Activated naive CD4-positive, alpha-beta T cell treated with anti-CD3 and anti-CD28 coated beads for 36 hours (primary cell): ENCODE measurements at regions of chr19 and their contacts with region 1.

Region 1: DNA sequence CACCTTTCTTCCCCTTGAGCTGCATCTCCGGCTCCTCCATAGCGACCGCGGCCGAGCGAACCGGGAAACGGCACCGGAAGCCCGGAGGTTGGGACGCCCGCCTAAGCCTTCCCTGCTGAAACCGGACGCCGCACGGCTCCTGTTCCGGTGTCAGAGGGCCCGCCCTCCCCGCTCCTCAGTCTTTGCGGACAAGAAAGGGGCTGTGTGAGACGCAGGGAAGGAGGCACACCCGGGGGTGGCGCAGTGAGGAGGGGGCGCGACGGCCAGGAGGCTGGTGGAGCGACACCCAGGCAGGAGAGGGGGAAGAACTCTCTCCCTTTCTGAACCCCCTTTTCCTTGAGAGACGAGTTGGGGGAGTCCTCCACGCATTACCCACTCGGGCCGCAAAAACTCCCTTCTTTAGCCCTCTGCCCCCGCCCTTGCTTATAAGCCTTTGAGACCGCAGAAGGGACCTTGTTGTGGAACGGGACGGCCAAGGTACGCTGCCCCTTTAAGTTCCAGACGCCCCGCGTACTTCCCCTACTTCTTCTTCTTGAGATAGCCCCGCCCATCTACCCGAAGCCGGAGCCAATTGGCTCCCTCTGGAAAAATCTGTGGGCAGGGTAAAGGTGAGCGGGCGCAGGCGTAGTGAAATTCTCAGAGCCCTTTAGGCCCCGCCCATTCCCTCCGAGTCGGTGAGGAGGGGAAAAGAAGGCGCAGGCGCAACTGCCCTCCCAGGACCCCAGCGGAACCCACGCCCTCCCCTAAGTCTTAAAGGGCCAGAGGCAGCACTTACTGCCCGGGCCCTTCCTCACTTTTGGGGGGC is at the starts of genes BORCS8 and RFXANK:
- DNase-seq: peak; percentile 100
- H3K4me3 Mint-ChIP-seq: peak within 1 kb of the TSS; percentile 93
- H3K27ac Mint-ChIP-seq: peak within 1 kb of the TSS; percentile 96
- H3K4me1 Mint-ChIP-seq: peaks cover 49% of the 10 kb centered on the region
- H3K27me3 Mint-ChIP-seq: no peaks in the 10 kb centered on the region
- total RNA-seq, gene BORCS8: 14.0 to 16.1 TPM
- total RNA-seq, gene RFXANK: 48.4 to 49.3 TPM

Region 2: DNA sequence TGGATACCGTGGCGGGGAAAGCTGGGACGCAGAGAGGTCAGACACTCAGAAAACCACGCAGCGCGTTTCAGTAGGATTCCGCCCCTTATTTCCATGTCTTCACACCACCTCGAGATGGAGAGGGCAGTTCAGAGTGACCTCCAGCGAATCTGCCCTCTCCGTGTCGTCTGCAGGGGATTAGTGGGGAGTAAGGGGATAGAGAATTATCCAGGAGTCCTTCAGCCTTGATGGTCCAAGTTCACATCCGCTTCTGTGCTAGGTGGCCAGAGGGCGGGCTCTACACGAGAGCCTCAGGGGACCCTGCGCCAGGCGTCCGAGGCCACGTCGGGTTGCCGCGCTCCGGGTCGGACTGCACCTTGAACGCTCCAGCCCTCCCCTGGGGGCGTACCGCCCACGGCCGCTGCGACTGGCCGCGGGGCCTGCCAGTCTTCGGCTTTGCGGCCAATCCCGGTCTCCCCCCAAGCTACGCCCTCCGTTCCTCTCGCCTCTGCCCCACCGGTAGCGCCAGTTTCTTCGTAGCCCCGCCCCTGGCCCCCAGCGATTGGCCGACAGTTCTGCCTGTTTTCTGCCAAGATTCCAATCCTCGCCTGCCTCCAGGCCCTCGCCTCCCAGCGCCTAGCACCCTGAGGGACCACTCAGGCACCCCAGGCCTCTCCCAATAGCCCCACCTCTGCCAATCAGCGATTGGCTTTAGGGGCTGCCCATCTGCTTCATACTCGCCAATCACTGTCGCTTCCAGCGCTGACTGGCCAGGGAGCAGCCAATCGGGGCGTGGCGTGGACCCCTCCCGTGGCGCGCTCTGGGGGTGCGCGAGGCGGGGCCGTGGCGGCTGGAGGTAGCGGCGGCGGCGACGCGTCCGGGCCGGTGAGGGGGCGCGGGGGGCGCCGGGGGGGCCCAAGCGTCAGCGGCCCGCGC is 128.8 kb before region 1 on chr19 and contains the start of gene SLC25A42:
- CTCF ChIA-PET with region 1: no interaction called
- intact Hi-C with region 1: loop called (anchors 1 kb)
- DNase-seq: peak; percentile 99
- H3K4me3 Mint-ChIP-seq: peak within 1 kb of the TSS; percentile 85
- H3K27ac Mint-ChIP-seq: peak within 1 kb of the TSS; percentile 83
- H3K4me1 Mint-ChIP-seq: peaks cover 41% of the 10 kb centered on the region
- H3K27me3 Mint-ChIP-seq: no peaks in the 10 kb centered on the region
- total RNA-seq, gene SLC25A42: 6.7 to 8.5 TPM

Region 3: GRCh38 chr19:19170053-19170872 is 22.0 kb before region 1 on chr19 and contains the start of gene MEF2B:
- CTCF ChIA-PET with region 1: interaction called, 11 read pairs
- intact Hi-C with region 1: no loop called
- DNase-seq: peak; percentile 74
- H3K4me3 Mint-ChIP-seq: peak within 1 kb of the TSS; percentile 28
- H3K27ac Mint-ChIP-seq: no peak within 1 kb of the TSS
- H3K4me1 Mint-ChIP-seq: peaks cover 11% of the 10 kb centered on the region
- H3K27me3 Mint-ChIP-seq: no peaks in the 10 kb centered on the region
- total RNA-seq, gene MEF2B: 3.1 to 4.6 TPM

Region 4: DNA sequence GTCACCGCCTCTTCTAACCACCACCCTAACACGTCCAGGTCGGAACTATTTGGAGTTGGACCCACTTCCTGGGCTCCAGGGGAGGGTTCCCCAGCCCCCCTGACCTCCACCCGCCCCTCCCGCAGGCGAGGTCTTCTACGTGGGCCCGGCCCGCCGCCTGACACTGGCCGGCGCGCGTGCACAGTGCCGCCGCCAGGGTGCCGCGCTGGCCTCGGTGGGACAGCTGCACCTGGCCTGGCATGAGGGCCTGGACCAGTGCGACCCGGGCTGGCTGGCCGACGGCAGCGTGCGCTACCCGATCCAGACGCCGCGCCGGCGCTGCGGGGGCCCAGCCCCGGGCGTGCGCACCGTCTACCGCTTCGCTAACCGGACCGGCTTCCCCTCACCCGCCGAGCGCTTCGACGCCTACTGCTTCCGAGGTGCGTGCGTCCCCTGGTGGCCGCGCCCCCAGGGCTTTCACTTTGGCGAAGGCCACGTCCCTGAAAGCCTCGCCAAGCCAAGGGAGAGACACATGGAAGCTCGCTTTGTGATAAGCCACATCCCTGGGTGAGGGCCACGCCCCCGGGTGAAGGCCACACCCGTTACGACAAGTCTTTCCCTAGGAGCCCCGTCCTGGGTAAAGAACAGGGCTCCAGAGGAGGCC is 32.7 kb after region 1 on chr19:
- CTCF ChIA-PET with region 1: interaction called, 3 read pairs
- intact Hi-C with region 1: loop called (anchors 1 kb)
- DNase-seq: peak; percentile 81
- H3K4me3 Mint-ChIP-seq: peak overlapping the region; percentile 56
- H3K27ac Mint-ChIP-seq: no peak overlapping the region
- H3K4me1 Mint-ChIP-seq: peaks cover 2% of the 10 kb centered on the region
- H3K27me3 Mint-ChIP-seq: peaks cover 12% of the 10 kb centered on the region

Region 5: DNA sequence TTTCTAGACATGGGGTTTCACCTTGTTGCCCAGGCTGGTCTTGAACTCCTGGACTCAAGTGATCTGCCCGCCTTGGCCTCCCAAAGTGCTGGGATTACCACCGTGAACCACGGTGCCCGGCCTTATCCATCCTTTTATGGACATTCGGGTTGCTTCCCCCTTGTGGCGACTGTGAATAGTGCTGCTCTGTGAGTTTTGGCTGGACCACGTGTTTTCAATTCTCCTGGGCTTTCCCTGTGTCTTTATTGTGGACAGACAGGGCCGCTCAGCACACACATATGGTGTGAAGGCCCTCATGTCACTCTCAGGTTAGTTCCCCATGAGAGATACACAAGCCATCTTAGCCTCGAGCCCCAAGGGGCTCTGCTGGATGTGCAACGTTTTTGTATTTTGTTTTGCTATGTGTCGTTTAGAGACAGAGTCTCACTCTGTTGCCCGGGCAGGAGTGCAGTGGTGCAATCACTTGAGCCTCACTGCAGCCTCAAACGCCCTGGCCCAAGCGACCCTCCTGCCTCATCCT is 168.9 kb after region 1 on chr19:
- CTCF ChIA-PET with region 1: no interaction called
- intact Hi-C with region 1: loop called (anchors 1 kb)
- DNase-seq: peak; percentile 92
- H3K4me3 Mint-ChIP-seq: no peak overlapping the region
- H3K27ac Mint-ChIP-seq: no peak overlapping the region
- H3K4me1 Mint-ChIP-seq: peaks cover 27% of the 10 kb centered on the region
- H3K27me3 Mint-ChIP-seq: no peaks in the 10 kb centered on the region

Region 6: DNA sequence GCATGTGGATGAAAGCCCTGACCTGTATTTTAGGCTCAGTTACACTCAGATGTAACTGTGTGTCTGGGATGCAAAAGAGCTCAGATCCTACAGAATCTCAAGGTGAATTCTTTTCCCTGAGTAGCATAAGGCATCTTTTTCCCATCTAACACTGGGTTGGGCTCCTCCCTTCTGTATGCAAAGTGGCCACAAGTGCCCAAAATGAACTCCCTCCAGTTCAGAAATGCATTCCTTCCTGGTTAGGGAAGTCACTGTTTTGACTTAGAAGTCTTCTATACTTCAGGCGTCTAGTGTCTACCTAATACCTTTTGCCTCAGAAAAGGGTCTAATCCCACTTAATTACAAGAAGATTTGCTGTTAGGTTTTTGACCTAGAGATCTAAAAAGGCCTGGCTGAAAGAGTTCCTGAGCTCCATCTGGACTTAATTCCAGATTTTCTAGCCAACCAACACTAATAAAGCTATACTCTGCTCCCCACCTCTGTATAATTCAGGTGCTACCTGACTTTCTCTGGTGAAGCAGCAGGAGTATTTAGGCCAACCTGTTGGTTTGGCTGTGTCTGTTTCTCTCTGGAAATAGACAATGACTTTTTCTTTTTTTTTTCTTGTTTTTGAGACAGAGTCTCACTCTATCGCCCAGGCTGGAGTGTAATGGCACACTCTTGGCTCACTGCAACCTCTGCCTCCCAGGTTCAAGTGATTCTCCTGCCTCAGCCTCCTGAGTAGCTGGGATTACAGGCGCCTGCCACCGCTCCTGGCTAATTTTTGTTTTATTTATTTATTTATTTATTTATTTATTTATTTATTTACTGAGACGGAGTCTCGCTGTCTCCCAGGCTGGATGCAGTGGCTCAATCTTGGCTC is 182.9 kb after region 1 on chr19:
- CTCF ChIA-PET with region 1: no interaction called
- intact Hi-C with region 1: no loop called
- DNase-seq: no peak
- H3K4me3 Mint-ChIP-seq: no peak overlapping the region
- H3K27ac Mint-ChIP-seq: no peak overlapping the region
- H3K4me1 Mint-ChIP-seq: peaks cover 7% of the 10 kb centered on the region
- H3K27me3 Mint-ChIP-seq: no peaks in the 10 kb centered on the region

Region 7: GRCh38 chr19:19385108-19385899 is 193.0 kb after region 1 on chr19:
- CTCF ChIA-PET with region 1: no interaction called
- intact Hi-C with region 1: no loop called
- DNase-seq: peak; percentile 100
- H3K4me3 Mint-ChIP-seq: peak overlapping the region; percentile 84
- H3K27ac Mint-ChIP-seq: peak overlapping the region; percentile 72
- H3K4me1 Mint-ChIP-seq: peaks cover 38% of the 10 kb centered on the region
- H3K27me3 Mint-ChIP-seq: no peaks in the 10 kb centered on the region

Region 8: GRCh38 chr19:19515764-19516519 is 323.7 kb after region 1 on chr19 and contains the start of gene NDUFA13:
- CTCF ChIA-PET with region 1: no interaction called
- intact Hi-C with region 1: loop called (anchors 1 kb)
- DNase-seq: peak; percentile 96
- H3K4me3 Mint-ChIP-seq: peak within 1 kb of the TSS; percentile 86
- H3K27ac Mint-ChIP-seq: peak within 1 kb of the TSS; percentile 96
- H3K4me1 Mint-ChIP-seq: peaks cover 36% of the 10 kb centered on the region
- H3K27me3 Mint-ChIP-seq: no peaks in the 10 kb centered on the region
- total RNA-seq, gene NDUFA13: 351 to 376 TPM